ENCODE measurements at regions of chr11 and their contacts with region 1.

Region 1: GRCh38 chr11:44104481-44105294 is 9.2 kb downstream of the EXT2 start:
- DNase-seq: no peak
- ATAC-seq: no peak
- H3K4me3 ChIP-seq: no peak overlapping the region
- H3K27ac ChIP-seq: no peak overlapping the region
- H3K4me1 ChIP-seq: no peaks in the 10 kb centered on the region
- H3K27me3 ChIP-seq: no peaks in the 10 kb centered on the region
- CTCF ChIP-seq: peak; percentile 25

Region 2: DNA sequence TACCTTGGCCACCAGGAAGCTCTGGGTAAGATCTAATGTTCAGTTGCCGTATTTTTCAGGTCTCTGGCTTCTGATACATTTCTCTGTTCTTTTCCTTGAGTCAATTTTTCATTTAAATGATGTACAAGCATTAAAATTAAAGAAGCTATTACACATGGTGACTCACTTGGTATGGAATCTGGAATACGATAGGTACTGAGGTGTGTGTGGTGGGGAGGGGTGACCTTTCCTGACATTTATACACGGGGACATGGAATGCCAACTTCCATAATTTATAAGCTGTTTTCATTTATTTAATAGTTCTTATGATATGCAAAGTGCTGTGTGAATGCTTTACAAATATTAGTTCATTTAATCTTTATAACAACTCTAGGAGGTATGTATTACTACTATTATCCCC is 253.0 kb after region 1 on chr11:
- CTCF ChIA-PET with region 1: interaction called, 10 read pairs
- POLR2A ChIA-PET with region 1: no interaction called
- in situ Hi-C with region 1: no loop called
- intact Hi-C with region 1: no loop called
- DNase-seq: no peak
- ATAC-seq: no peak
- H3K4me3 ChIP-seq: no peak overlapping the region
- H3K27ac ChIP-seq: no peak overlapping the region
- H3K4me1 ChIP-seq: no peaks in the 10 kb centered on the region
- H3K27me3 ChIP-seq: peaks cover 20% of the 10 kb centered on the region
- CTCF ChIP-seq: no peak

Region 3: DNA sequence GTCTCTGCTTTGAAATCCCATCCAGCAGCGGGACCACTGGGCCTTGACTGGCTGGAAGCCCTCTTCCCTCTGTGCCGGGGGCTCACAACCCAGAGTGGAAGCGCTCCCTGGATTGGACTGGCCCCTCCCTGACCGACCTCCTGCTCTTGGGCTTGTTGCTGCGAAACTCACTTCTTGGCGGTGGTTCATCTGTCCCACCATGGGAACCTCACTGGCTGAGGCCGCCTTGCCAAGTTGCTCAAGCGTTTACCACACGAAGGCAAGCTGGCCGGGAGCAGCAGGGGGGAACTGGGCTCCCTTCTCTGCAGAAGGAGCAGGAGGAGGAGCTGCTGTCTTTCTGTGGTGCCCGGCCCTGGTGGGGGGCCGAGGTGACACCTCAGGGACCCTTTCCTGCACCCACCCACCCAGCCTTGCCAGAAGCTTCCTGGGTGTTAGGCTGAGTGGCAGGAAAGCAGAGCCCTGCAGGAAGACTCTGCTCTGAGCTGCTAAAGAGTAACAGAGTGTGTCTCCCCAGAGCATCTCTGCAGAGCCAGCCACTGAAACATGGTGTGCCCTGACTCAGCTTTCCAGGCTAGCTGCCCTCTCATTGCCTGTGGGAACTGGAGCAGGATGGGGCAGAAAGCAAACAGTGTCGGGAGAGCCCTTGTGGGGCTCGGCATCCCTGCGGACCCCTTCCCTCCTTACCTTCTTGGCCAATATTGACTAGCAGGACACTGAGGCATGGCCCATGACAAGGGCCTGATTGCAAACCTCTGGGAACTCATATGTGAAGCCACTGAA is 293.8 kb after region 1 on chr11:
- CTCF ChIA-PET with region 1: no interaction called
- POLR2A ChIA-PET with region 1: no interaction called
- in situ Hi-C with region 1: no loop called
- intact Hi-C with region 1: no loop called
- DNase-seq: no peak
- ATAC-seq: no peak
- H3K4me3 ChIP-seq: no peak overlapping the region
- H3K27ac ChIP-seq: no peak overlapping the region
- H3K4me1 ChIP-seq: no peaks in the 10 kb centered on the region
- H3K27me3 ChIP-seq: no peaks in the 10 kb centered on the region; the same call in 1 of the 2 replicates
- CTCF ChIP-seq: no peak

Region 4: DNA sequence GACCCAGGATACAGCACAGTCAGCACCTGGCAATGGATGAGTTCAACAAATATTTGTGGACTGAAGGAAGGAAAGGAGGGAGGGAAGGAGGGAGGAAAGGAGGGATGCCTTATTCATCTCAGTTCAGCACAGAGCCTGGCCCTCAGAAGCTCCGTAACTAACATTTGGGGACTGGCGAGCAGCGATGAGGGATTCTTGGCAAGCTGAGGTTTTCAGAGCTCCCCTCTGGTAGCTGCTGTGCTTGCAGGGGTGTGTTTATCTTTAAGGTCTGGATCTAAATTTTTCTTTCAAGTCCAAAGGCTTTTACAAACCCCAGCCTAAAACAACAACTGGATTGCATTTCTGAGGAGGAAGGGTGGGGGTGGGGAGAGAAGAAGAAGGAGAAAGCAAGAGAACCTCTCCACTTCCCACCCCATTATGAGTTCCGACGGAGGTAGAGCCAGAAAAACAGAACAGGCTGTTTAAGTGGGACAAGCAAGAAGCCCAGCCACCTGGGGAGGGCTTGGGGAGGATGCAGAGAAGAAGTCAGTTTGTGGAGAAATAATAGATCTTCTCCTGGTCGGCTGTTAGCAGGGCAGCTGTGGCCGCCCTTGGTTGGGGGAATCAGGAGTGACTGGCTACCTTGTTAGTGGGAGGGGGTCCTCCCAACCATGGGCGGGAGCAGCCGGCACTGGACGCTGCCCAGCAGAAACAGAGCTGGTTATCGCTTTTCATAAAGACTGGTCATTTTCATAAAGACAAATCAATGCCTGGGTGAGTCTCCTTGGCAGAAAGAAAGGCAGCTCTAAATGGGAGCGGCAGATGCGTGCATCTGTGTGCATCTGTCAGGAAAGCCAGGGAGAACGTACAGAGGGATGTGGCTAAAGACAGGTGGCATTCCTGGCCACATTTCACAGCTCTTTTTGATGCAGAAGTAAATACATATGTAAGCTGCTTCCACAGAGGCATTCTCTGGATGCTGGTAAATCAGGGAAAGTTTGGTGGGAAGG is 700.1 kb after region 1 on chr11:
- CTCF ChIA-PET with region 1: no interaction called
- POLR2A ChIA-PET with region 1: interaction called, 14 read pairs
- in situ Hi-C with region 1: no loop called
- intact Hi-C with region 1: no loop called
- DNase-seq: no peak
- ATAC-seq: peak; percentile 44
- H3K4me3 ChIP-seq: no peak overlapping the region
- H3K27ac ChIP-seq: no peak overlapping the region
- H3K4me1 ChIP-seq: no peaks in the 10 kb centered on the region
- H3K27me3 ChIP-seq: no peaks in the 10 kb centered on the region; the same call in 1 of the 2 replicates
- CTCF ChIP-seq: no peak

Measured in Panc1 (cell line).